HCT116 (cell line): ENCODE measurements at regions of chr6 and their contacts with region 1.

Region 1: GRCh38 chr6:63272397-63272796 is 47.4 kb downstream of the LGSN start:
- DNase-seq: peak; percentile 27
- ATAC-seq: peak; percentile 63; the same call in 1 of the 2 replicates
- H3K4me3 ChIP-seq: no peak overlapping the region
- H3K27ac ChIP-seq: no peak overlapping the region
- H3K4me1 ChIP-seq: no peaks in the 10 kb centered on the region
- H3K27me3 ChIP-seq: no peaks in the 10 kb centered on the region
- CTCF ChIP-seq: peak; percentile 12 to 55 (median 31); a peak in 4 of 6 replicates
- POLR2A ChIP-seq: no peak
- RAD21 ChIP-seq: peak; percentile 62

Region 2: DNA sequence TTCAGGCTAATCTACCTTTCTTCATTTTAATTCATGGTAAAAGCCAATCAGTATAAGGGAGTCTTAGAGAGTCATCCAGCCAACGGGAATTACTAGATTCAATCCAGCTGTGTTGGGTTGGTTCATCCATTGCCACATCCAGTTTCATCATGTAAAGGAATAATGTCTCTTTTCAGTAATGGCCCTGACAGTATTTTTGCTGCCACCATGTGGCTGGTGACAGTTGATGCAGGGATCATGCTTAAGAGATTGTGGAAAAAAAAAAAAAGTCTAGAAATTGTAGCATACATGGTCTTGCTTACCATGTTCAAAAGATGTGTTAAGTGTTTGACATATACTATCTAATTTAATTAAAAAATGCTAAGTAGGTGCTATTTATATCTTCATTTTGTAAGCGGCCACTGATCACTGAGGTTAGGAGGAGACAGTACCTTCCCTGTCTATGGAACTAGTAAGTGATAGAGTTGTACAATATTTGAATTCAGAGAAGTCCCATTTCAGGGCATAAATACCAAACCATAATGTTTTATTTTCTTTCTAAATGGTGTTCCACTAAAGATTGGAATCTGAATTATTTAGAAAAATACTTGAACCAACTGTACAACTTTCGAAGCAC is 1122.2 kb before region 1 on chr6:
- CTCF ChIA-PET with region 1: no interaction called
- POLR2A ChIA-PET with region 1: no interaction called
- RAD21 ChIA-PET with region 1: no interaction called
- intact Hi-C with region 1: loop called (anchors 5 kb)
- DNase-seq: peak; percentile 6
- ATAC-seq: no peak
- H3K4me3 ChIP-seq: no peak overlapping the region
- H3K27ac ChIP-seq: no peak overlapping the region
- H3K4me1 ChIP-seq: no peaks in the 10 kb centered on the region
- H3K27me3 ChIP-seq: no peaks in the 10 kb centered on the region
- CTCF ChIP-seq: peak in 2 of 3 experiments; percentile 60 to 61; a peak in 4 of 6 replicates
- POLR2A ChIP-seq: no peak
- RAD21 ChIP-seq: peak; percentile 23; the same call in 1 of the 2 replicates

Region 3: GRCh38 chr6:62775427-62776022 is 496.9 kb before region 1 on chr6:
- CTCF ChIA-PET with region 1: no interaction called
- POLR2A ChIA-PET with region 1: no interaction called
- RAD21 ChIA-PET with region 1: no interaction called
- intact Hi-C with region 1: loop called (anchors 5 kb)
- DNase-seq: peak; percentile 0
- ATAC-seq: no peak
- H3K4me3 ChIP-seq: no peak overlapping the region
- H3K27ac ChIP-seq: no peak overlapping the region
- H3K4me1 ChIP-seq: no peaks in the 10 kb centered on the region
- H3K27me3 ChIP-seq: no peaks in the 10 kb centered on the region
- CTCF ChIP-seq: peak in 2 of 3 experiments; percentile 31 to 61; a peak in 3 of 6 replicates
- POLR2A ChIP-seq: no peak
- RAD21 ChIP-seq: no peak

Region 4: DNA sequence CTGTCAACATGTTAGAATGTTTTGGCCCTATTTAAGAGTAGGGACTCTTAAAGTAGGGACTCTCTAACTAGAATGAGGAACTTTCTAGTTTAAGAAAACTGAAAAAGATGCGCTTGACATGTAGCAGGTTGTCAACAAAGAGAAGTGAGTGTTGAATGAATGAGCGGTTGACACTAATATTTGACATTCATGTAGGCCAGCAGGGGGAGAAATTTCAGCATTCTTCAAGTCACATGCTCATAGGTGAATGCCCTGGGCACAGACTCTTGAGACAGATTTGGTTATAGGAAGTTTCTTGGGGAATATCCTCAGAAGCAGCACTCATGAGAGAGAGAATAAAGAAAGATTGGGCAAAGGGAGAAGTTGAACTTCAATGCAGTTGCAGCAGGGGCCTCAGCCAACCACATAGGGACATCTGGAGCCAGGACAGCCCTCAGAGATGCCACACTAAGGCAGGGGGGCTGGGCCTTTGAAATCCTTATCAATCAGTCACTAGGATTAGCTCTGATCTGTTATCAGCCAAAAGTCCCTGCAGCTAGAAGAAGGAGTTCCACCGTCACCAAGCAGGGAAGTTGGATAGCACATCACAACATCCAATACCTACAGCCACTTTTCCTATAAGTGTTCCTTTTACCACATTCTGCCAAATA is 206.2 kb before region 1 on chr6:
- CTCF ChIA-PET with region 1: interaction called, 5 read pairs
- POLR2A ChIA-PET with region 1: no interaction called
- RAD21 ChIA-PET with region 1: no interaction called
- intact Hi-C with region 1: loop called (anchors 5 kb)
- DNase-seq: peak; percentile 2
- ATAC-seq: peak; percentile 59; the same call in 1 of the 2 replicates
- H3K4me3 ChIP-seq: no peak overlapping the region
- H3K27ac ChIP-seq: no peak overlapping the region
- H3K4me1 ChIP-seq: no peaks in the 10 kb centered on the region
- H3K27me3 ChIP-seq: no peaks in the 10 kb centered on the region
- CTCF ChIP-seq: peak in 2 of 3 experiments; percentile 14 to 33; a peak in 1 of 6 replicates
- POLR2A ChIP-seq: no peak
- RAD21 ChIP-seq: no peak